ENCODE measurements at regions of chr5 and their contacts with region 1.

Region 1: GRCh38 chr5:94086206-94086605 is 344.8 kb upstream of the POU5F2 start:
- DNase-seq: no peak

Region 2: GRCh38 chr5:94111209-94112004 is 25.2 kb after region 1 on chr5:
- CTCF ChIA-PET with region 1: interaction called, 10 read pairs
- POLR2A ChIA-PET with region 1: interaction called, 3 read pairs
- DNase-seq: peak; percentile 92

Measured in HEK293T (cell line).